ENCODE measurements at regions of chr7 and their contacts with region 1.

Region 1: DNA sequence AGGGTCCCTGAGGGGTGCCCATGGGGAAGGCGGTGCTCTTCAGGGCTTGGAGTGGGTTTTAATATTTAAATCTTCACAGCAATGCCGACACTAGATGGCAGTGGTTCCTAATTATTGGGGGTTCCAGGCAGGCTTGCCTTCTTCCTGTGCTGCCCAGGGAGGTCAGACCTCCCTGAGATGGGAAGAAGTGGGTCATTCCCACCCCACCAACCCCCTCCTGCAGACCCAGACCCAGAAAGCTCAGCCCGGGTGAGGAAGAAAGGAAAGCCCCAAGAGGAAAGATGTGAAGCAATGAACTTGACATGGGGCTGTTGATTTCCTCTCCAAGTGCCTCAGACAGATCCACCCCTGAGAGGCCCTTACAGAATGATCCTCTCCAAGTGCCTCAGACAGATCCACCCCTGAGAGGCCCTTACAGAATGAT is 85.1 kb upstream of the LANCL2 start:
- DNase-seq: peak; percentile 56
- ATAC-seq: peak; percentile 82 to 90

Region 2: DNA sequence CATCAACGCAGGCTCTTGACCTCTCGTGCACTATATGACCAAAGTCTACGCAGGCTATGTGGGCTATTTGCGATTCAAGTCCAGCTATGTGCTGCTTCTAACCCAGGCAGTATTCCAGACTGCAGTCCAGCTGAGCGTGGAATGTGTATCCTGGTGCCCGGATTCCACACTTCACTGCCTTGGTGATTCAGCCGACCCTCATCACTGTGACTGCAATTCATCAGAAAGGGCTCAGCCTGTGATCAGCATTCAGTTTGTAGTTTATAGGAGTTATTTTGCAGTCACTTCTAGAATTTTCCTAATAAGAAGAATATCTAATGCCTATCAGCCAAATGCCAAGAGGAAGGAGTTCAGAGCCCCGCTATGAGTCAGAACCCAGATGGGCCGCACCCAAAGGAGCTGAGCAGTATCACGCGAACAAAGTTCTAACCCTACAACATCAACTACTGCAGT is 34.7 kb before region 1 on chr7:
- intact Hi-C with region 1: no loop called
- DNase-seq: no peak
- ATAC-seq: peak; percentile 50 to 73

Region 3: GRCh38 chr7:55415173-55415778 is 135.2 kb after region 1 on chr7:
- intact Hi-C with region 1: loop called (anchors 1 to 2 kb)
- DNase-seq: peak; percentile 87
- ATAC-seq: peak; percentile 77 to 86

Region 4: DNA sequence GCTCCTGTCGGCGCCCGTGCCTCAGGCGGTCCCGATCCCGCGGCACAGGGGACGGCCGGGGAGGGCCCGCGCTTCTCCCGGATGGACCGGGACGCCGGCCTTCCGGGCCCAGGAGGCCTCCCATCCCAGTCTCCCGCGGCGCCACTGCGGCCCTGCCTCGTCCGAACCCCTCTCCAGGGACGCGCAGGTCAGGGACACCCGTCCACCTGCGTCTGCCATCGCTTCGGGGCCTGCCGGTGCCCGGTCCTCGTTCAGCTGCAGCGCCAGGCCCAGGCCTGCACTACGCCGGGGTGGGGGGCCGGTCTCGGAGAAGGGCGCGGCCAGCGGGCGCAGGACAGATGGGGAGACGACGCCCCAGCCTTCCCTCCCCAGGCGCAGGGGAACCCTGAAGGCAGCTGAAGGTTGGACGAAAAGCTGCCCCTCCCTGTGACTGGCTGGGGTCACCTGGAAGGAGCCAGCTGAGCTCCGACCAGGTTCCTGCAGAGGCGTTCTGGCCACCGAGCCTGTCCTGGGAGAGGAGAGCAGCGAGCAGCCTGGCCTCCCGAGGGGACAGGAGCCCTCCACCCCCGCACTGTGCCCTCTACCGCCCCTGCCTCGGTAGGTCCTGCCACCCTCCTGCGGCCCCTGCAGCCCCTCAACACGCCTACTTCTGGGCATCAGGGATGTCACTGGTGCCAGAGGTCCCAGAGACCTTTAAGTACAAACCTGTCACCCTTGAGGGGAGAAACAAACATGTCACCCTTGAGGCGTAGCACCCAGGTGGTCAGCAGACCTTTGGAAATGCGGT is 169.4 kb after region 1 on chr7:
- intact Hi-C with region 1: no loop called
- DNase-seq: no peak
- ATAC-seq: no peak

Region 5: GRCh38 chr7:55593515-55594318 is 313.7 kb after region 1 on chr7:
- intact Hi-C with region 1: loop called in 1 of 2 experiments (anchors 10 kb)
- DNase-seq: peak; percentile 70
- ATAC-seq: peak; percentile 50 to 76

Measured in left cardiac atrium (tissue), 4 donors.